ENCODE measurements at regions of chr11 and their contacts with region 1.

Region 1: GRCh38 chr11:61082062-61082870 is 20.0 kb upstream of the CD5 start:
- DNase-seq: peak; percentile 48
- ATAC-seq: no peak
- H3K4me3 Mint-ChIP-seq: peak overlapping the region; percentile 82
- H3K27ac Mint-ChIP-seq: peak overlapping the region; percentile 97
- H3K4me1 Mint-ChIP-seq: peaks cover 60% of the 10 kb centered on the region
- H3K27me3 Mint-ChIP-seq: no peaks in the 10 kb centered on the region

Region 2: GRCh38 chr11:60680455-60681119 is 401.7 kb before region 1 on chr11:
- POLR2A ChIA-PET with region 1: no interaction called
- DNase-seq: no peak
- ATAC-seq: no peak
- H3K4me3 Mint-ChIP-seq: no peak overlapping the region
- H3K27ac Mint-ChIP-seq: no peak overlapping the region
- H3K4me1 Mint-ChIP-seq: no peaks in the 10 kb centered on the region
- H3K27me3 Mint-ChIP-seq: peaks cover 6% of the 10 kb centered on the region

Region 3: GRCh38 chr11:60978546-60979380 is 103.5 kb before region 1 on chr11:
- POLR2A ChIA-PET with region 1: interaction called, 11 read pairs
- DNase-seq: peak; percentile 50
- ATAC-seq: peak; percentile 64
- H3K4me3 Mint-ChIP-seq: peak overlapping the region; percentile 76
- H3K27ac Mint-ChIP-seq: peak overlapping the region; percentile 91
- H3K4me1 Mint-ChIP-seq: peaks cover 73% of the 10 kb centered on the region
- H3K27me3 Mint-ChIP-seq: no peaks in the 10 kb centered on the region

Region 4: GRCh38 chr11:60994541-60995080 is 87.7 kb before region 1 on chr11:
- POLR2A ChIA-PET with region 1: no interaction called
- DNase-seq: no peak
- ATAC-seq: peak; percentile 62
- H3K4me3 Mint-ChIP-seq: peak overlapping the region; percentile 62
- H3K27ac Mint-ChIP-seq: peak overlapping the region; percentile 79
- H3K4me1 Mint-ChIP-seq: peaks cover 43% of the 10 kb centered on the region
- H3K27me3 Mint-ChIP-seq: no peaks in the 10 kb centered on the region

Region 5: GRCh38 chr11:61028272-61028761 is 53.9 kb before region 1 on chr11:
- POLR2A ChIA-PET with region 1: interaction called, 21 read pairs
- DNase-seq: peak; percentile 46
- ATAC-seq: peak; percentile 27
- H3K4me3 Mint-ChIP-seq: peak overlapping the region; percentile 84
- H3K27ac Mint-ChIP-seq: peak overlapping the region; percentile 95
- H3K4me1 Mint-ChIP-seq: peaks cover 66% of the 10 kb centered on the region
- H3K27me3 Mint-ChIP-seq: no peaks in the 10 kb centered on the region

Region 6: DNA sequence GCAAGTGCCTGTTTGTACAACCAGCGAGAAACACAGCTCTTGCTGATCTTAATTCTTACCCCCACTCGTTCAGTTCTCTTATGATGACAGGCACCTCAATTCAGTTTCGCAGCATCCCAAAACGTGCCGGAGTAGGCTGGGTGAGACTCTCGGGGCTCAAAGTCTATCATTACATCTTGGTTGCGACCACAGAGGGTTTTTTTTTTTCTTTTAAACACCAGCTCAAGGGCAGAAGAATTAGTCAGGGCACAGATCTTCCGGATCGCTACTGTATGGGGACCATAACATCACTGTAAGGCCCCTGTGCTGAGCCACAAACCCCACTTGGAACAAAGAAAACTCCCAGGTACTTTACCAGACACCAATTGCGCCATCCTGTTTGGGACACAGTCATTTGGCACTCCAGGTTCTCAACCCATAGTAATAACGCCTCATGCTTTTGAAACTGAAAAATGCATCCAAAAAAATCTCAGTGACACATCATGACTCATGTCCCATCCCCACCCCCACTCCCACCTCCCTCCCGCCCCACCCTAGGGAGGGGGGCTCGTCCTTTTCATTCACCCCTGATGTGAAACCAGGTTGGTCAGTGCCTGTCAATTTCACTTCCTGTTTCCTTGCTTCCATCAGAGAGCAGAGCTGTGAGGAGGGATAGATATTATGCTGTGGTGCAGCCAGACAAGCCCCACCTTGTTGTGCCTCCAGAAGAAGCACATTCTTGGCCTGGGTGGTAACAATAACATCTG is 21.0 kb before region 1 on chr11:
- POLR2A ChIA-PET with region 1: interaction called, 10 read pairs
- DNase-seq: peak; percentile 53
- ATAC-seq: peak; percentile 70
- H3K4me3 Mint-ChIP-seq: peak overlapping the region; percentile 80
- H3K27ac Mint-ChIP-seq: peak overlapping the region; percentile 92
- H3K4me1 Mint-ChIP-seq: peaks cover 50% of the 10 kb centered on the region
- H3K27me3 Mint-ChIP-seq: no peaks in the 10 kb centered on the region

Region 7: DNA sequence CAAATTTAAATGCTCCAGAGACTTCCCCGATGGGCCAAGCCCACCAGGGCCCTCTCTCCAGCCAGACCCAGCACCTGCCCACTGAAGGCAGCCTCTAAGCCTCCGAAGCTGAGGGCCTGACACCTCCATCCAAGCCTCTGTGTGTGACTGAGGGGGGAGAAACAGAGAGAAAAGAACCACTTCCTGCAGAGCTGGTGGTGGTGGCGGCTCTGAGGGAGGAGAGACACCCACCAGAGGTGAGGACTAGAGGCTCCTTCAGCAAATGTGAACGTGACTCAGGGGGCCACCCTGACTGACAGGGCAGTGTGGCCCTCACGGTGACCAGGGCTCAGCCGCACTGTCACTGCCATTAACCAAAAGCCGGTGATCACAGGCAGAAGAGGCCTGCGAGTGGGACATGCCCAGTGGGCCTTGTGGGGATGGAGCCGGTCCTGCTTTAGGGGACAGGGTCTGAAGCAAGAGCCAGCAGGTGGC is 11.0 kb before region 1 on chr11:
- POLR2A ChIA-PET with region 1: interaction called, 44 read pairs
- DNase-seq: peak; percentile 78
- ATAC-seq: peak; percentile 97
- H3K4me3 Mint-ChIP-seq: peak overlapping the region; percentile 78
- H3K27ac Mint-ChIP-seq: peak overlapping the region; percentile 94
- H3K4me1 Mint-ChIP-seq: peaks cover 71% of the 10 kb centered on the region
- H3K27me3 Mint-ChIP-seq: no peaks in the 10 kb centered on the region

Region 8: GRCh38 chr11:61102667-61103571 is 20.7 kb after region 1 on chr11:
- POLR2A ChIA-PET with region 1: interaction called, 20 read pairs
- DNase-seq: no peak
- ATAC-seq: peak; percentile 27
- H3K4me3 Mint-ChIP-seq: no peak overlapping the region
- H3K27ac Mint-ChIP-seq: no peak overlapping the region
- H3K4me1 Mint-ChIP-seq: peaks cover 37% of the 10 kb centered on the region
- H3K27me3 Mint-ChIP-seq: no peaks in the 10 kb centered on the region

Region 9: GRCh38 chr11:61111786-61112517 is 29.7 kb after region 1 on chr11:
- POLR2A ChIA-PET with region 1: interaction called, 34 read pairs
- DNase-seq: peak; percentile 54
- ATAC-seq: peak; percentile 97
- H3K4me3 Mint-ChIP-seq: peak overlapping the region; percentile 88
- H3K27ac Mint-ChIP-seq: peak overlapping the region; percentile 97
- H3K4me1 Mint-ChIP-seq: peaks cover 93% of the 10 kb centered on the region
- H3K27me3 Mint-ChIP-seq: no peaks in the 10 kb centered on the region

Region 10: GRCh38 chr11:61141601-61142028 is 59.3 kb after region 1 on chr11:
- POLR2A ChIA-PET with region 1: no interaction called
- DNase-seq: no peak
- ATAC-seq: no peak
- H3K4me3 Mint-ChIP-seq: no peak overlapping the region
- H3K27ac Mint-ChIP-seq: no peak overlapping the region
- H3K4me1 Mint-ChIP-seq: peaks cover 10% of the 10 kb centered on the region
- H3K27me3 Mint-ChIP-seq: no peaks in the 10 kb centered on the region

Measured in activated naive CD8-positive, alpha-beta T cell treated with anti-CD3 and anti-CD28 coated beads, Interleukin-2, amount 10 ng/mL, durations not matched to agents 7 days and 5 days (primary cell).